Naive thymus-derived CD4-positive, alpha-beta T cell (primary cell): ENCODE measurements at regions of chr18 and their contacts with region 1.

Region 1: DNA sequence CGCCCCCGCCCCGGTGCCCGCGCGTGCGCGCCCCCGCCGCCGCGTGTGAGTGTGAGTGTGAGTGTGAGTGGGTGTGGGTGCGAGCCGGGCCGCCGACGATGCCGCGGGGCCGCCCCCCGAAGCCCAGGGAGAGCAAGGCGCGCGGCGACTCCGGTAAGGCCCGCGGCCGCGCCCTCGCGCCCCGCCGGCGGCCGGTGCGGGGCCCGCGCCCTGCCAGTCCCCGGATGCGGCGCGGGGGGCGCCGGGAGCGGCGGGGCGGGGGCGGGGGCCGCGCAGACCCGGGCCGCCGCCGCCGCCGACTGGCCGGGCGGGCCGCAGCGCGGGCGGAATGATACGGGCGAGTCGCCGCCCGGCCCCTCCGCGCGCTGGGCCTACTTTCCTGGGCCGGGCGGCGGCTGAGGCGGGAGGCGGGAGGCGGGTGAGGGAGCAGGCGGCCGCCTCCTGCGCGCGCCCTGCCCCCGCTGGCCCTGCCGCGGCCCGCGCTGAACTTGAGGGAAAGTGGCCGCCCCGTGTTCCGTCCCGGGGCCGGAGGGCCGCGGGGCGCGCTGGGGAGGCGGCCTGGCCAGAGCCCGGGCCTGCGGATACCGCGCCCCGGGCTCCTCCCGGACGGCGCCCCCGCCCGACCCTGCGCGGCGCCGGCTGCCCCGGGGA is at the start of gene ZNF236:
- DNase-seq: peak; percentile 38 to 78 (median 61)
- ATAC-seq: peak; percentile 76
- H3K4me3 ChIP-seq: peak within 1 kb of the TSS; percentile 99
- H3K4me3 Mint-ChIP-seq: peak within 1 kb of the TSS; percentile 88 to 96 (median 93)
- H3K27ac ChIP-seq: peak within 1 kb of the TSS; percentile 84
- H3K27ac Mint-ChIP-seq: peak within 1 kb of the TSS; percentile 89 to 97 (median 96)
- H3K4me1 ChIP-seq: peaks cover 8 to 10% of the 10 kb centered on the region in 2 donors
- H3K4me1 Mint-ChIP-seq: peaks cover 38 to 65% (median 56%) of the 10 kb centered on the region in 7 donors
- H3K27me3 ChIP-seq: no peaks in the 10 kb centered on the region
- H3K27me3 Mint-ChIP-seq: no peaks in the 10 kb centered on the region
- total RNA-seq, gene ZNF236: 25.9 to 34.5 (median 30.6) TPM

Region 2: GRCh38 chr18:76835380-76835779 is 12.7 kb after region 1 on chr18:
- CTCF ChIA-PET with region 1: no interaction called
- POLR2A ChIA-PET with region 1: interaction called, 4 read pairs
- intact Hi-C with region 1: loop called in 1 of 2 experiments (anchors 2 kb)
- DNase-seq: no peak
- ATAC-seq: no peak
- H3K4me3 ChIP-seq: no peak overlapping the region
- H3K4me3 Mint-ChIP-seq: no peak overlapping the region
- H3K27ac ChIP-seq: no peak overlapping the region
- H3K27ac Mint-ChIP-seq: peak overlapping the region in 1 of 9 donors; percentile 42
- H3K4me1 ChIP-seq: no peaks in the 10 kb centered on the region
- H3K4me1 Mint-ChIP-seq: peaks cover 22 to 60% (median 49%) of the 10 kb centered on the region in 7 donors
- H3K27me3 ChIP-seq: no peaks in the 10 kb centered on the region
- H3K27me3 Mint-ChIP-seq: no peaks in the 10 kb centered on the region

Region 3: DNA sequence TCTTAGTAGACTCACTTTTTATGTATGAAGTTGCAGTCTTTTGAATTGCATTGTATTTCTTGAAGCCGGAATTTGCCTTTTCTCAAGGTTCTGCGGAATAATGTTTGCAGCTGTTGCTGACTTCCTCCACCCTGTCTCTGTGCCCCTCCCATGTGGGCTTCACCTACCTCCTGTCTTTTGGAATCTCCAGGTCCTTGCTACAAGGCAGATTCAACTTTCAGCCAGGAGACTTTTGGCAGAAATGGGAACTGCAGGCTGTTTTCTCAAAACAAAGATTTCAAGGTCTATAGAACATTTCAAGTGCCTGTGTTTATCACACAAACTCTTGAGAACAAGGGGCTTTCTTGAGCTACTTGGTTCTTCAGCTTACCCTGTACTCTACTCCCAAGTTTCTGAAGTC is 25.3 kb after region 1 on chr18:
- CTCF ChIA-PET with region 1: no interaction called
- POLR2A ChIA-PET with region 1: no interaction called
- intact Hi-C with region 1: no loop called
- DNase-seq: no peak
- ATAC-seq: no peak
- H3K4me3 ChIP-seq: no peak overlapping the region
- H3K4me3 Mint-ChIP-seq: no peak overlapping the region
- H3K27ac ChIP-seq: no peak overlapping the region
- H3K27ac Mint-ChIP-seq: no peak overlapping the region
- H3K4me1 ChIP-seq: no peaks in the 10 kb centered on the region
- H3K4me1 Mint-ChIP-seq: peaks cover 18 to 54% (median 47%) of the 10 kb centered on the region in 7 donors
- H3K27me3 ChIP-seq: no peaks in the 10 kb centered on the region
- H3K27me3 Mint-ChIP-seq: no peaks in the 10 kb centered on the region

Region 4: DNA sequence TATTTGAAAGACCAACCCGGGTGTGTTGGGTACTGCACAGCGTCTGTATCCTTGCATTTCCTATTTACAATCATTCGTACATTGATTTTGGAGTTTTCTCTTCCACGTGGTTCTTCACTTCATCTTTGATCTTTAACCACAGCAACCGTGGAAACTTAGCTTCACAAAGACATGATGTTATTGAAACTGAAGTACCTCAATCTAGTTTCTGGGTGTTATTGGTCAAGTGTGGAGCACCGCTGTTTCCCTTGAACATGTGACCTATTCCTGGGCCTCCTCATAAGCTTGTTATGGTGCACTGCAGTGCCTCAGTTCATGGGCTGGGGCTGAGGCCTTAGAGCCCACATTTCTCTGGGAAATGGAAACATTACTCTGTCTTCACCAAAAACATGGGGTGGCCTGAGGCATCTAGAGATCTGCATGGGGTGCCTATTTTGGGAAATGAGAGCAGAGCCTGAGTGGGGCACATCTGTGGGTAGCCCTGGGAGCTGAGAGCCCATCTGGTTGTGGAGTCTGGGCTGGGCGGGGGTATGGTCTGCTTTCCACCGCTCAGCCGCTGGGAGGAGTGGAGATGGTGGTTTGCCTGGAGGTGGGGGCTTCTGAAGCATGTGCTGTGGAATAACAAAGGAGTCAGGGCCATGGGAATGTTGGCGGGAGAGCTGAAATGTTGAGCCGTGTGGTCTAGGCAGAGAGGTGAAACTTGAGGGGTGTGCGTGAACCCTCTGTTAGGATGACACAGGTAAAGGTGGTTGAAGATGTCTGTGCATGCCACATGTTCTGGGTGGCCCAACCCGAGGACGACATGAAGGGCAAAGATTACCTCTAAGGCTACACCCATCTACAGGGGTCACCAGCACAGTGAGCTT is 37.1 kb after region 1 on chr18:
- CTCF ChIA-PET with region 1: interaction called, 4 read pairs
- POLR2A ChIA-PET with region 1: no interaction called
- intact Hi-C with region 1: loop called (anchors 2 to 5 kb)
- DNase-seq: peak in 8 of 9 donors; percentile 35 to 57 (median 44)
- ATAC-seq: peak; percentile 70
- H3K4me3 ChIP-seq: no peak overlapping the region
- H3K4me3 Mint-ChIP-seq: peak overlapping the region in 8 of 10 donors; percentile 19 to 83 (median 64)
- H3K27ac ChIP-seq: no peak overlapping the region
- H3K27ac Mint-ChIP-seq: peak overlapping the region; percentile 64 to 90 (median 84)
- H3K4me1 ChIP-seq: peaks cover 0 to 12% of the 10 kb centered on the region in 2 donors
- H3K4me1 Mint-ChIP-seq: peaks cover 16 to 42% (median 34%) of the 10 kb centered on the region in 7 donors
- H3K27me3 ChIP-seq: no peaks in the 10 kb centered on the region
- H3K27me3 Mint-ChIP-seq: no peaks in the 10 kb centered on the region

Region 5: GRCh38 chr18:76914314-76914713 is 91.7 kb after region 1 on chr18:
- CTCF ChIA-PET with region 1: no interaction called
- POLR2A ChIA-PET with region 1: no interaction called
- intact Hi-C with region 1: no loop called
- DNase-seq: no peak
- ATAC-seq: no peak
- H3K4me3 ChIP-seq: no peak overlapping the region
- H3K4me3 Mint-ChIP-seq: no peak overlapping the region
- H3K27ac ChIP-seq: no peak overlapping the region
- H3K27ac Mint-ChIP-seq: no peak overlapping the region
- H3K4me1 ChIP-seq: no peaks in the 10 kb centered on the region
- H3K4me1 Mint-ChIP-seq: no peaks in the 10 kb centered on the region
- H3K27me3 ChIP-seq: no peaks in the 10 kb centered on the region
- H3K27me3 Mint-ChIP-seq: no peaks in the 10 kb centered on the region